Right ventricle myocardium inferior (tissue), 1 donor: ENCODE measurements at regions of chr1 and their contacts with region 1.

Region 1: DNA sequence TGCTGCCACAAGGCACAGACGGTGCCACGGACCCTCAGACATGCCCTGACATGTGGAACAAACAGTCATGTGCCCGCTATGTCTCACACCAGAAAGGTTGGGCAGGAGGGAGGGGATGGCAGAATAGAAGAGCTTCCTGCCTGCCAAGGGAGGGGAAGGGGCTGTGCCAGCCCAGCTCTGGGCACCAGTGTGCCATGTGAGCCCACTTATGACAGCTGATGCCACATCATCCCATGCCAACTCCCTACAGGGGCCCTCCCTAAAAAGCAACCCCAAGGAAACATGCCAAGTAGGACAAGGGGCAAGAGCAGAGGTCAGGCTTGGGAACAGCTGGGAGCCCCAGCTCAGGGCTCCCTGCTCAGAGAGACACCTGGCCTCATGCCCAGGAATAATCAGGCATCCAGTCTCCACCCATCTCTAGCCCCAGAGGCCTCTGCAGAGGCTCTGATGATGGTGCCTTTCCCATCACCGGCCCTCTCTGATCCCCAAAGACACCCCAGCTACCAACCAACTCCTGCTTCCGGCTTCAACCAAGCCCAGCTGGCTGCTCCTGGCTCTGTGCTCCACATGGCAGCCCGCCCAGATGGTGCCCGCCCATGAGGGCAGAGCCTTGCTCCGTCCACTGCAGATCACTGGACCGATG is 10.3 kb downstream of the ADGRB2 start:
- DNase-seq: peak; percentile 70
- ATAC-seq: peak; percentile 73

Region 2: GRCh38 chr1:31715087-31715872 is 38.5 kb before region 1 on chr1:
- intact Hi-C with region 1: loop called (anchors 2 kb)
- DNase-seq: peak; percentile 95
- ATAC-seq: peak; percentile 97

Region 3: GRCh38 chr1:31771891-31772668 is 18.3 kb after region 1 on chr1:
- intact Hi-C with region 1: no loop called
- DNase-seq: no peak
- ATAC-seq: no peak